A549 (cell line): ENCODE measurements at regions of chr10 and their contacts with region 1.

Region 1: GRCh38 chr10:97701438-97702069 is 12.0 kb upstream of the MARVELD1 start:
- DNase-seq: peak; percentile 74 to 88
- ATAC-seq: peak; percentile 94 to 97
- H3K4me3 ChIP-seq: no peak overlapping the region
- H3K27ac ChIP-seq: peak overlapping the region; percentile 63 to 74
- H3K4me1 ChIP-seq: peaks cover 12% of the 10 kb centered on the region
- CTCF ChIP-seq: peak; percentile 88
- EP300 ChIP-seq: no peak
- POLR2A ChIP-seq: no peak
- RAD21 ChIP-seq: peak; percentile 76 to 89

Region 2: DNA sequence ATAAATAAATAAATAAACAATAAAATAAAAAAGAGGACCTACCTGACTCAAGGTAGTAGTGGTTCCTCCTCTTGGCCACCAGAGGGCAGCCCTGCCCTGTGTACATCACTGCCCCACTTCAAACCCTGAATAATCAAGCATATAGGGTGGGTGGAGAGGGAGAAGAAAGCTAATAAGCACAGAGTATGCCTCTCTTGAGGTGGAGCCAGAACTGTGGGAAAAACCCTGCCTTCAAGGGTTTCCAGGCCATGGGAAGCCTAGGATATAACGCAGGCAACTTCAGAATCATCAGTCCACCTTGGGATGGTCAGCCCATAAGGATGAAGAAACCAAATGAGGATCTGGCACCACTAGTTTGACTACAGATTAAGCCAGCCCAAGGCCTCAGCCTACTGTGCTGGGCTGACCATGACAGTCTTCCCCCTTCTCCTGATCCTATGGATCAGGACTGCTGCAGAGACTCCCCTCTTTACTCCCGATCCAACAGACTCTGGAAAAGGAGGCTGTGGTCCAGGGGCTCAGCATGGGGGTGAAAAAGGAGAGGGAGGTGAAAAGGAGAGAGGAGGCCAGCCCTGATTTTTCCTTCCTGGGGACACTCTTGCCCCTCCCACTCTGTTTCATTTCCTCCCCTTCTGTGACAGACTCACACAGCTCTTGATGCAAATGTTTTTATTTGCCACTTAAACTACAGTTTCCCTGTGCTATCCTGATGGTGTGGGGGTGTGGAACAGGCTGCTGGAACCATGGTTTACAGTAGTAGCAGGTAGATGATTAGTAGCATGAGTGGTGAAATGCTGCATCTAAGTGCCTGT is 24.6 kb before region 1 on chr10:
- CTCF ChIA-PET with region 1: interaction called, 1,127 read pairs
- POLR2A ChIA-PET with region 1: no interaction called
- DNase-seq: peak; percentile 77 to 83
- ATAC-seq: peak; percentile 57 to 74
- H3K4me3 ChIP-seq: no peak overlapping the region
- H3K27ac ChIP-seq: peak overlapping the region in 1 of 2 experiments; percentile 38; a peak in 1 of 6 replicates
- H3K4me1 ChIP-seq: peaks cover 26% of the 10 kb centered on the region
- CTCF ChIP-seq: peak; percentile 91
- EP300 ChIP-seq: no peak
- POLR2A ChIP-seq: no peak
- RAD21 ChIP-seq: peak; percentile 87

Region 3: DNA sequence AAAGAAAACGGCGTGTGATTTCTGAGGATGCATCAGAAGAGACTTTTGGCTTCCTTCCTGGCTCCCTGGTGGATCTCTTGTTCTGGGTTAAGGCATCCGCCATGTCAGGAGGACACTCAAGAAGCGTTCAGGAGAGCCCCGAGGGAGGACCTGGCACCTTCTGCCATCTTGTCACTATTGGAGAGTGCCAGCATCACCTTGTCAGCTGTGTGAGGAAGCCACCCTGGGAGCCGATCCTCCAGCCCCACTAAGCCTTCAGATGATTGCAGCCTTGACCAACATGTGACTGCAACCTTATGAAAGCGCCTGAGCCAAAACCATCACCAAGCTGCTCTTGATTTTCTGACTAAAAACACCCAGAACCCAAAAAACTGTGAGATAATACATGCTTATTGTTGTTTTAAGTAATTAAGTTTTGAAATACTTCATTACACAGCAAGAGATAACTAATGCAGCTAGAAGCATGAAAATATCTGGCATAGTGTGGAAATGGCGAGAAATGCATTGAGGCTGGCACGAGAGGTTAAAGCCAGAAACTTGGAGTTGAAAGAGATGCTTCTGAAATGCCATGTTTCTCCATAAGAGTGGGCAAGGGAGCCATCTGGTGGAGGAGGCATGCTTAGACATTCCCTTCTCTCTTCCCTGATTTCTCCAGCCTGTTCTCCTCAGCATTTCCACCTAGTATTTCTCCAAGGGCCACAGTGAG is 29.9 kb after region 1 on chr10:
- CTCF ChIA-PET with region 1: interaction called, 1,006 read pairs
- POLR2A ChIA-PET with region 1: interaction called, 6 read pairs
- DNase-seq: peak; percentile 60 to 81
- ATAC-seq: peak; percentile 86 to 89
- H3K4me3 ChIP-seq: no peak overlapping the region
- H3K27ac ChIP-seq: peak overlapping the region in 1 of 2 experiments; percentile 26; a peak in 2 of 6 replicates
- H3K4me1 ChIP-seq: peaks cover 7% of the 10 kb centered on the region; the same call in 1 of the 3 replicates
- CTCF ChIP-seq: peak; percentile 97
- EP300 ChIP-seq: no peak
- POLR2A ChIP-seq: no peak
- RAD21 ChIP-seq: peak; percentile 97 to 98

Region 4: DNA sequence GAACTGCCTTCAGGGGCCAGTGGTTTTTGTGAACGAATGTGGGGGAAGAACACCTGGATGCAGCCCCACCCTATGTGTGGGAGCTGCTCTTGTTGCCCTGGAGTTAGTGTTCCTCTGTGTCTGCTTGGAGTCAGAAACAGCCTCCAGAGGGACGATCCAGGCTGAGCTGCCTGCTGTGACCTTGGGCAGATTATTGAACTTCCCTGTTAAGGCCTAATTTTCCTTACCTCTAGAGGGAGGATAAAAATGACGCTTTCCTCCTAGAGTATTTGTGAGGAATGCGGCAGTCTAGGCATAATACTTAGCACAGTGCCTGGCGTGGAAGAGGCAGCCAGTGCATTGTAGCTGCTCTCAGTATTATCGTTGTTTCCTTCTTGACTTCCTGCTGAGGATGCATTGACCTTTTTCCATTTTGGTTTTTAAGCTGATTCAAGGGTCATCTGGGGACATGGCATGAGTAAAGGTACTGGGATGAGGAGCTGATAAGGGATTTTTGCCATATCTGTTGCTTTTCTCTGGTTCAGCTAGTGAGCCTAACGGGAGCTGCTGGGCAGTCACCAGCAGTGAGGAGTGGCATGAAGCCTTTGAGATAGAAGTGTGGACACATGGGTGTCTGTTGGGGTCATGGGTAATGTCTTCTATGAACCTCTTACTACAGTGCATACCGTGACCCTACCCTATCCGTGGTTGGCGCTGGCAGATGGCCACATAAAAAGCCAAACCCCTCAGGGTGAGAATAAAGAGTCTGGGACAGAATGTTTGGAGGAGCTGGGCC is 41.8 kb after region 1 on chr10:
- CTCF ChIA-PET with region 1: interaction called, 10 read pairs
- POLR2A ChIA-PET with region 1: no interaction called
- DNase-seq: no peak
- ATAC-seq: peak in 1 of 2 experiments; percentile 37; a peak in 3 of 6 replicates
- H3K4me3 ChIP-seq: no peak overlapping the region
- H3K27ac ChIP-seq: no peak overlapping the region
- H3K4me1 ChIP-seq: peaks cover 3% of the 10 kb centered on the region; the same call in 2 of the 3 replicates
- CTCF ChIP-seq: no peak
- EP300 ChIP-seq: no peak
- POLR2A ChIP-seq: no peak
- RAD21 ChIP-seq: no peak